ENCODE measurements at regions of chr5 and their contacts with region 1.

Region 1: GRCh38 chr5:149822301-149822700 is 92.2 kb downstream of the PPARGC1B start:
- DNase-seq: no peak
- H3K4me3 ChIP-seq: no peak overlapping the region
- H3K27ac ChIP-seq: peak overlapping the region in 3 of 4 donors; percentile 87 to 95 (median 90)
- H3K4me1 ChIP-seq: peaks cover 0 to 56% (median 53%) of the 10 kb centered on the region in 4 donors
- H3K27me3 ChIP-seq: no peaks in the 10 kb centered on the region
- CTCF ChIP-seq: no peak
- EP300 ChIP-seq: no peak
- POLR2A ChIP-seq: no peak

Region 2: GRCh38 chr5:149807176-149807575 is 15.1 kb before region 1 on chr5:
- intact Hi-C with region 1: loop called (anchors 2 kb)
- DNase-seq: no peak
- H3K4me3 ChIP-seq: no peak overlapping the region
- H3K27ac ChIP-seq: peak overlapping the region; percentile 80 to 97 (median 86)
- H3K4me1 ChIP-seq: peaks cover 0 to 87% (median 76%) of the 10 kb centered on the region in 4 donors
- H3K27me3 ChIP-seq: no peaks in the 10 kb centered on the region
- CTCF ChIP-seq: no peak
- EP300 ChIP-seq: no peak
- POLR2A ChIP-seq: no peak

Measured in sigmoid colon (tissue), 7 donors.